Colonic mucosa (tissue), 4 donors: ENCODE measurements at regions of chr11 and their contacts with region 1.

Region 1: DNA sequence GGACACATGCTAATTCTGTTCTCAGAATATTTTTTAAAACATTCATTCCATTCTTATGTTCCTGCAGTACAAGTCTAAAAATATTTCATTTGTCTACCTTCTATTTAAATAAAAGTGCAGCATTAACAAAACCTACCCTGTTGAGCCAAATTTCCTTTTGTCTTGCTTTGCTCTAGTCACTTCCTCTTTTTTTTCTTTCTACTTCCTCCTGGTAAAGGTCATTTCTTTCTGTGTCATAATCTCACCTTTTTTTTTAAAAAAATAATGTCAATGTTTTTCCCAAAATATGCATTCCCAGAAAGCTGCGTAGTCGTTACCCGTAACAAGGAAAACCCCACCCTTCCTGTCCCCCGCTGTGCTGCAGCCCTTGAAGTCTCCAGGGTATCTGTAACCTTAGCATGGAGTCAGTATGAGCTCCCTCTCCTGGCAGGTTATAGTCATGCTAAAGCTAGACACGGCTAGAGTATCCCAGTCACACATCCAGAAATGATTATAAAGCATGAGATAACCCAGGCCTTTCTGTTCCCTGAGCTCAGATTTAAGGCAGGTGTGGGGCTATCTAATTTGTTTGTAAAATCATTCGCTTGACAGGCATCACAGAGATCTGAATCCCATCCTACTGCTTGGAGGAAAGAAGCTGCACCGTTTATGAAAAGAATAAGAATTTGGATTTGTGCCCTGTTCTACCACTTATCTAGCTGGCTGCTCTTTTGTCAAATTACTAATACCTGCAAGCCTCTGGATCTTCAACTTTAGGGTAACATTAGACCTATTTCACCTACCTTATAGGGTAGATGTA is 51.1 kb upstream of the EED start:
- DNase-seq: peak; percentile 82
- H3K4me3 ChIP-seq: no peak overlapping the region
- H3K27ac ChIP-seq: peak overlapping the region; percentile 41
- H3K4me1 ChIP-seq: no peaks in the 10 kb centered on the region
- H3K27me3 ChIP-seq: no peaks in the 10 kb centered on the region
- CTCF ChIP-seq: peak; percentile 59

Region 2: GRCh38 chr11:86041975-86042378 is 151.5 kb before region 1 on chr11:
- intact Hi-C with region 1: loop called (anchors 5 kb)
- DNase-seq: peak; percentile 81
- H3K4me3 ChIP-seq: no peak overlapping the region
- H3K27ac ChIP-seq: no peak overlapping the region
- H3K4me1 ChIP-seq: peaks cover 9% of the 10 kb centered on the region
- H3K27me3 ChIP-seq: no peaks in the 10 kb centered on the region
- CTCF ChIP-seq: peak; percentile 78